ENCODE measurements at regions of chr12 and their contacts with region 1.

Region 1: DNA sequence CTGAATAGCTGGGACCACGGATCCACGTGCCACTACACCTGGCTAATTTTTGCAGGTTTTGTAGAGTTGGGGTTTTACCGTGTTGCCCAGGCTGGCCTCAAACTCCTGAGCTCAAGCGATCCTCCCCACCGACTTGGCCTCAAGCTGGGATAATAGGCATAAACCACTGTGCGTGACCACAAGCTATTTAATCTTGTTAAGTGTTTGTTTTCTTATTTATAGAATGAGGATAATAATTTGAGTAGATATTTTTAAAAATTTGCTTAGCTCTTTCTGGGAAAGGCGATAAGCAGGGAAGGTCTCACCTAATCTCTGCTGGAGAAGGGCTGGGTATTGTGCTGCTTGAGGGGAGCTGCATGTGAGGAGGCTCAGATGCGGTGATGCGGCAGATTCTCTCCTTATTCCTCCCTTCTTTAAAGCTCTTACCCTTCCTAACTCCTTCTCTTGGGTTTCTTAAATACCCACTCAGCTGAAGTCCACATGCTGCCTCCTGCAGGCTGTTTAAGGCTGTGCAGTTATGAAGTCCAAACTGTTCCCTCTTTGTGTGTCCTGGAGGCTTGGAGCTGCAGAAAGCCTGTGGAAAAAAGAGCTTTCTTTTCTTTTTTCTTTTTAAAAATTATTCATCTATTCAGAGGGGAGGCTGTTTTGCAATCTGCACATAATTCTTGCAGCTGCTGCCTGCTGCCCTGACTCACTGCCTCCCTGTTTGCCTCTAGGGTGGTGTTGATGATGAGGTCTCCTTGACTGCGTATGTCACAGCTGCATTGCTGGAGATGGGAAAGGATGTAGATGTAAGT is 37.9 kb downstream of the A2ML1 start:
- DNase-seq: peak; percentile 46 to 63
- H3K4me3 ChIP-seq: no peak overlapping the region
- H3K27ac ChIP-seq: no peak overlapping the region
- H3K4me1 ChIP-seq: no peaks in the 10 kb centered on the region
- H3K27me3 ChIP-seq: no peaks in the 10 kb centered on the region
- CTCF ChIP-seq: peak; percentile 31 to 89 (median 73)
- EP300 ChIP-seq: no peak
- POLR2A ChIP-seq: no peak
- RAD21 ChIP-seq: peak; percentile 69 to 76

Region 2: DNA sequence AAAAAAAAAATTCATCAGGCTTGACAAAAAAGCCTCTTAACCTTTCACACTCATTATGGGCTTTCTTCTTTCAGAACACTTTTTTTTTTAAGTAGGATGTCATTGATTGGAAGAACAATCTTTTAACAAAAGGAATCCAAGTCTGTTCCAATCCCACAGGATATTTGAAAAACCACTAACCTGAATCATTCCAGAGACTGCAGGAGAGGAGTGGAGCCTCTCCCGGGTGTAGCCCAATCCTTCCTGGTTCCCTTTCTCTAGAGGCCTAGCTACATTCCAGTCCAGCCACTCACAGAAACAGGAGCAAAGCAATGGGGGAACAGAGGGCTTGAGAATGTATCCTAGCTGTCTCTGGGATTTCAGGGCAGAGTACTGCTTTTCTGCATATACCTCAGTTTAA is 202.0 kb before region 1 on chr12:
- CTCF ChIA-PET with region 1: interaction called, 11 read pairs
- POLR2A ChIA-PET with region 1: interaction called, 3 read pairs
- DNase-seq: no peak
- H3K4me3 ChIP-seq: no peak overlapping the region
- H3K27ac ChIP-seq: no peak overlapping the region
- H3K4me1 ChIP-seq: no peaks in the 10 kb centered on the region; a peak in 1 of 7 replicates
- H3K27me3 ChIP-seq: no peaks in the 10 kb centered on the region
- CTCF ChIP-seq: no peak
- EP300 ChIP-seq: no peak
- POLR2A ChIP-seq: no peak
- RAD21 ChIP-seq: no peak

Region 3: DNA sequence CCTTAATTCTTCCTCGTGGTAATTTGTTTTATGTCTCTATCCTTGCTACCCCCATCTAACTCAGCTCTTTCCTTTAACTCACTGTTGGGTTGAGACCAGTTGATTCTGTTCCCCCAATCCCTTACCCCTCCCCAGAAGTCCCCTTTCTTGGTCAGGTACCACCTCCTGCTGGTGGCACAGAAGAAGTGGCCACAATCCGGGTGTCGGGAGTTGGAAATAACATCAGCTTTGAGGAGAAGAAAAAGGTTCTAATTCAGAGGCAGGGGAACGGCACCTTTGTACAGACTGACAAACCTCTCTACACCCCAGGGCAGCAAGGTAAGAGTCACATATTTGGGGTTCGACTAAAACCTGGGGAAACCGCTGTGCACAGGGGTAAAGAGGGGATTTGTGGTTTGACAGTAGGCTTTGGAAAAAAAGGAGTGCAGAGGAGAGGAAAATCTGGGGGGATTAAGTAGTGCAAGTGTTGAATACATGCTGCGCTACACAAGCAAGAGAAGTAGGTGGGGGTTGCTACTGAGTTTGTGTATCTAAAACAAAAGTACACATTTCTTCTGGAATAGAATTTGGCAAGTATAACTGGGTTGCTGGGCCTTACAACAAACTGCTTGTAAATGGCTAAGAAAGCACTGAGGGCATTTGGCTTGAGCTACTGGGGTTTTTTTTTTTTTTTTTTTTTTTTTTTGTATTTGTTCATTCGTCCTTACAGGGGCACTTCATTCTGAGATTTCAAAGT is 36.6 kb before region 1 on chr12:
- CTCF ChIA-PET with region 1: interaction called, 43 read pairs
- POLR2A ChIA-PET with region 1: interaction called, 4 read pairs
- DNase-seq: peak in 1 of 2 experiments; percentile 84
- H3K4me3 ChIP-seq: peak overlapping the region; percentile 13 to 49 (median 26); a peak in 6 of 8 replicates
- H3K27ac ChIP-seq: no peak overlapping the region
- H3K4me1 ChIP-seq: peaks cover 5 to 20% (median 14%) of the 10 kb centered on the region in 4 experiments
- H3K27me3 ChIP-seq: no peaks in the 10 kb centered on the region
- CTCF ChIP-seq: peak; percentile 81 to 93 (median 89)
- EP300 ChIP-seq: no peak
- POLR2A ChIP-seq: no peak
- RAD21 ChIP-seq: peak; percentile 99 to 100

Region 4: GRCh38 chr12:8834230-8834629 is 26.1 kb before region 1 on chr12:
- CTCF ChIA-PET with region 1: interaction called, 43 read pairs
- POLR2A ChIA-PET with region 1: no interaction called
- DNase-seq: no peak
- H3K4me3 ChIP-seq: no peak overlapping the region; a peak in 1 of 8 replicates
- H3K27ac ChIP-seq: no peak overlapping the region
- H3K4me1 ChIP-seq: peaks cover 4 to 17% (median 12%) of the 10 kb centered on the region in 4 experiments; a peak in 5 of 7 replicates
- H3K27me3 ChIP-seq: no peaks in the 10 kb centered on the region
- CTCF ChIP-seq: no peak
- EP300 ChIP-seq: no peak
- POLR2A ChIP-seq: no peak
- RAD21 ChIP-seq: no peak

Region 5: DNA sequence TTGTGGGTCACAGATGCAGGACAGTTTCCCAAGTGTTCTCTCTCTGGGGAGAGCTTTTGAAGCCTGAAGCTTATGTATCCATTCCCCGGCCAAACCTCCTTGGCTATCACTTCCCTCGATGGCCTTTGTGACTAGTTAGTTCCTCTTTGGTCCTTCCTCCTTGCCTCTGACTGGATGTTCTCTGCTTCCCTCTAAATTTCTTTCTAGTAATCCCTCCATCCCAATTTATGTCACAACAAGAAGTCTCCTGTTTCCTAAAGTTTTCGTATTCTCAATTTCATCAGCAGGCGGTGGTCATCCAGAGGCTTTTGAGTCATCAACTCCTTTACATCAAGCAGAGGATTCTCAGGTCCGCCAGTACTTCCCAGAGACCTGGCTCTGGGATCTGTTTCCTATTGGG is 10.5 kb before region 1 on chr12:
- CTCF ChIA-PET with region 1: interaction called, 16 read pairs
- POLR2A ChIA-PET with region 1: interaction called, 5 read pairs
- DNase-seq: no peak
- H3K4me3 ChIP-seq: no peak overlapping the region
- H3K27ac ChIP-seq: no peak overlapping the region
- H3K4me1 ChIP-seq: no peaks in the 10 kb centered on the region
- H3K27me3 ChIP-seq: no peaks in the 10 kb centered on the region
- CTCF ChIP-seq: no peak
- EP300 ChIP-seq: no peak
- POLR2A ChIP-seq: no peak
- RAD21 ChIP-seq: no peak

Region 6: DNA sequence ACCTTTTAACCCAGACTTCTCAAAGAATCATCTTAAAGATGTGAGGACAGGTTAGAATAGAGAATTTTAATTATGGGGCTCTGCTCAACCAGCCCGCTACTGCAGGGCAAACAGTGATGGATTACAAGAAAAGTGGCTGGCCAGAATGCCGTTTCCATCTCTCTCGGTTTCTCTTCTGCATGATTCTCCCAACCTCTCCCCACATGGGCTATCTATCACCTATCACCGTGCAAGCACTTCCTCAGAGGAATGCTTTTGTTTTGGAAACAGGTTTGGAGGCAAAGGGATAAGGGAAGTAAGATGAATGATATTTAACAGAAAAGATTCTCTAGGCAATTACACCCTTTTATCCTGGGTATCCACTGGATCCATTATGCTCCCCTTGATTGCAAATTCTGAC is 16.5 kb after region 1 on chr12:
- CTCF ChIA-PET with region 1: interaction called, 80 read pairs
- POLR2A ChIA-PET with region 1: interaction called, 5 read pairs
- DNase-seq: no peak
- H3K4me3 ChIP-seq: no peak overlapping the region
- H3K27ac ChIP-seq: no peak overlapping the region
- H3K4me1 ChIP-seq: peaks cover 0 to 2% (median under 1%) of the 10 kb centered on the region in 4 experiments; a peak in 3 of 7 replicates
- H3K27me3 ChIP-seq: no peaks in the 10 kb centered on the region
- CTCF ChIP-seq: no peak
- EP300 ChIP-seq: no peak
- POLR2A ChIP-seq: no peak
- RAD21 ChIP-seq: no peak

Region 7: GRCh38 chr12:8914716-8915526 is 54.6 kb after region 1 on chr12:
- CTCF ChIA-PET with region 1: interaction called, 11 read pairs
- POLR2A ChIA-PET with region 1: interaction called, 6 read pairs
- DNase-seq: peak in 1 of 2 experiments; percentile 76
- H3K4me3 ChIP-seq: peak overlapping the region; percentile 91 to 99 (median 98)
- H3K27ac ChIP-seq: peak overlapping the region; percentile 65; the same call in 1 of the 2 replicates
- H3K4me1 ChIP-seq: peaks cover 0 to 33% (median 11%) of the 10 kb centered on the region in 4 experiments; a peak in 5 of 7 replicates
- H3K27me3 ChIP-seq: no peaks in the 10 kb centered on the region
- CTCF ChIP-seq: no peak
- EP300 ChIP-seq: no peak
- POLR2A ChIP-seq: 0 out of 3 replicates have a peak, but pooled peaks of 1 of the 2 experiments have one; percentile 42
- RAD21 ChIP-seq: no peak

Region 8: DNA sequence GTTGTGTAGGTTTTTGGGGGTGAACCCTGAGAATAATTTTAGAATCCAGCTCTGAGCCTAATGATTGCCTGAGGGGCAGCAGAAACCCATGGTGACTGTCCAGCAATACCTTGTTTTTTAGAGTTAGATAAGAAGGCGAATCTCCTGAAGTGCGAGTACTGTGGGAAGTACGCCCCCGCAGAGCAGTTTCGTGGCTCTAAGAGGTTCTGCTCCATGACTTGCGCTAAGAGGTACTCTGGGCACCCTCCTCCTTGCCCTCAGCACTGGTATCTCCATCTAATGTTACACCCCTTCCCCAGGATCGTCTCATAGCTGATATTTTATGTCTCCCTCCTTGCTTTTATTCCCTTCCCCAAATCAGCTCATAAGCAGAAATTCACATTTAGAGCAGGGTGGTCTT is 76.4 kb after region 1 on chr12:
- CTCF ChIA-PET with region 1: no interaction called
- POLR2A ChIA-PET with region 1: no interaction called
- DNase-seq: no peak
- H3K4me3 ChIP-seq: no peak overlapping the region
- H3K27ac ChIP-seq: no peak overlapping the region
- H3K4me1 ChIP-seq: no peaks in the 10 kb centered on the region
- H3K27me3 ChIP-seq: no peaks in the 10 kb centered on the region
- CTCF ChIP-seq: no peak
- EP300 ChIP-seq: no peak
- POLR2A ChIP-seq: peak in 1 of 2 experiments; percentile 56; a peak in 1 of 3 replicates
- RAD21 ChIP-seq: no peak

Measured in H1 (cell line).